ENCODE measurements at regions of chr5 and their contacts with region 1.

Region 1: GRCh38 chr5:96198356-96199058 is 234.5 kb downstream of the PCSK1 start:
- DNase-seq: no peak
- ATAC-seq: no peak
- H3K4me3 ChIP-seq: no peak overlapping the region
- H3K27ac ChIP-seq: no peak overlapping the region
- H3K4me1 ChIP-seq: no peaks in the 10 kb centered on the region
- H3K27me3 ChIP-seq: no peaks in the 10 kb centered on the region
- CTCF ChIP-seq: no peak
- EP300 ChIP-seq: no peak
- POLR2A ChIP-seq: no peak
- RAD21 ChIP-seq: no peak

Region 2: DNA sequence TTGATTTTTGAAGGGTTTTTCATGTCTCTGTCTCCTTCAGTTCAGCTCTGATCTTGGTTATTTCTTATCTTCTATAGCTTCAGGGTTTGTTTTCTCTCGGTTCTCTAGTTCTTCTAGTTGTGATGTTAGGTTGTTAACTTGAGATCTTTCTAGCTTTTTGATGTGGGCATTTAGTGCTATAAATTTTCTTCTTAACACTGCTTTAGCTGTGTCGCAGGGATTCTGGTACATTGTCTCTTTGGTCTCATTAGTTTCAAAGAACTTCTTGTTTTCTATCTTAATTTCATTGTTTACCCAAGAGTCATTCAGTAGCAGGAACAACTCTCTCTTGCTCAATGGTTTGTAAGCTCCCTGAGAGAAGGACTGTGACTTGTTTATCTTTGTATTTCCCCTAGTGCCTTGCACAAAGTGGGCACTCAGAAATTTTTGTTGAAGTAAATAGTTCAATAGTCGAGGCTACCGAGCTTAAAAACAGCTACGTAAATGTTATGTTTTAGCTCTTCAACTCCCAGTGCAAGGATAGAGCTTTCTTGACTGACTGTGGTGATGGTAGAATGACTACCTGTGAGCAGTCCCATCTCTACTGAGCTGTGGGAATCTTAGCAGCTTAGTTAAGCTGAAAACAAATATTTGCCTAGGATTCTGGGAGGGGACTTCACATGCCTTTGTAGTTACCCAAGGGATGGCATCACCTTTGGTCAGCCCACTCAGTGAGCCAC is 11.0 kb before region 1 on chr5:
- CTCF ChIA-PET with region 1: interaction called, 3 read pairs
- POLR2A ChIA-PET with region 1: interaction called, 5 read pairs
- RAD21 ChIA-PET with region 1: interaction called, 3 read pairs
- SMC1A ChIA-PET with region 1: interaction called, 11 read pairs
- in situ Hi-C with region 1: no loop called
- intact Hi-C with region 1: no loop called
- DNase-seq: no peak
- ATAC-seq: no peak
- H3K4me3 ChIP-seq: no peak overlapping the region
- H3K27ac ChIP-seq: no peak overlapping the region
- H3K4me1 ChIP-seq: no peaks in the 10 kb centered on the region
- H3K27me3 ChIP-seq: no peaks in the 10 kb centered on the region
- CTCF ChIP-seq: no peak
- EP300 ChIP-seq: no peak
- POLR2A ChIP-seq: no peak
- RAD21 ChIP-seq: no peak

Region 3: DNA sequence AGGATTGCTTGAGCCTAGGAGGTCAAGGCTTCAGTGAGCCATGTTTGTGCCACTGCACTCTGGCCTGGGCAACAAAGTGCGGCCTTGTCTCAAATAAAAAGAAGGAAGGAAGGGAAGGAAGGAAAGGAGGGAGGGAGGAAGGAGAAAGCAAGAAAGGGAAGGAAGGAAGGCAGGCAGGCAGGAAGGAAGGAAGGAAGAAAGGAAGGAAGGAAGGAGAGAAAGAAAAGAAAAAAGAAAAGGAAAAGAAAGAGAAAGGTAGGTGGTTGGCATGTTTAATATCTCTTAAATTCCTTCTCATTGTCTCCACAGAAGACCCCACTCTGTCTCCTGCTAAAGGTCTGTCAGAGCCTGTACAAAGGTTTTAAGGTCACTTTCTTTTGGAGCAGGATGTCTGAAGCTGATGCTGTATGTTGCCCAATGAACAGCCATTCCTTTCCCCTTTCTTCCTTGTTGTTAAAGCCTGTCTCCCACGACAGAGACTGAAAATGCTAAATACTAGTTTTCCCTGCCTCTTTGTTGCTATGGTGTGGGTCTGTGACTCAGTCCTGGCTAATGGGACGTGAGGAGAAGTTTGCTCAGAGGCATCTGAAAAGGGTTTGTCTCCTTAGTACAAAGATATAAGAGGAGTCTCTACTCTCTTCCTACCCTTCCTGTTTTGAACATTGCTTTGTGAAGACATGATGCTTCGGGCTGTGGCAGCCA is 21.2 kb after region 1 on chr5:
- CTCF ChIA-PET with region 1: interaction called, 5 read pairs
- POLR2A ChIA-PET with region 1: interaction called, 5 read pairs
- RAD21 ChIA-PET with region 1: interaction called, 4 read pairs
- SMC1A ChIA-PET with region 1: interaction called, 21 read pairs
- in situ Hi-C with region 1: no loop called
- intact Hi-C with region 1: no loop called
- DNase-seq: no peak
- ATAC-seq: no peak; the same call in none of the 3 replicates
- H3K4me3 ChIP-seq: no peak overlapping the region
- H3K27ac ChIP-seq: no peak overlapping the region; the same call in 1 of the 2 replicates
- H3K4me1 ChIP-seq: no peaks in the 10 kb centered on the region
- H3K27me3 ChIP-seq: no peaks in the 10 kb centered on the region
- CTCF ChIP-seq: no peak
- EP300 ChIP-seq: no peak
- POLR2A ChIP-seq: no peak
- RAD21 ChIP-seq: no peak

Region 4: GRCh38 chr5:96297867-96298266 is 99.4 kb after region 1 on chr5:
- CTCF ChIA-PET with region 1: no interaction called
- POLR2A ChIA-PET with region 1: no interaction called
- RAD21 ChIA-PET with region 1: no interaction called
- SMC1A ChIA-PET with region 1: no interaction called
- in situ Hi-C with region 1: no loop called
- intact Hi-C with region 1: no loop called
- DNase-seq: no peak
- ATAC-seq: peak; percentile 21; the same call in 2 of the 3 replicates
- H3K4me3 ChIP-seq: no peak overlapping the region
- H3K27ac ChIP-seq: no peak overlapping the region
- H3K4me1 ChIP-seq: no peaks in the 10 kb centered on the region
- H3K27me3 ChIP-seq: no peaks in the 10 kb centered on the region
- CTCF ChIP-seq: no peak
- EP300 ChIP-seq: no peak
- POLR2A ChIP-seq: no peak
- RAD21 ChIP-seq: no peak